Activated CD4-positive, alpha-beta memory T cell treated with anti-CD3 and anti-CD28 coated beads for 36 hours (primary cell): ENCODE measurements at regions of chr19 and their contacts with region 1.

Region 1: GRCh38 chr19:18000935-18001778 is 6.8 kb upstream of the ARRDC2 start:
- DNase-seq: peak; percentile 95
- H3K4me3 Mint-ChIP-seq: peak overlapping the region; percentile 87
- H3K27ac Mint-ChIP-seq: peak overlapping the region; percentile 97
- H3K4me1 Mint-ChIP-seq: peaks cover 22% of the 10 kb centered on the region
- H3K27me3 Mint-ChIP-seq: no peaks in the 10 kb centered on the region

Region 2: GRCh38 chr19:17873786-17874757 is 127.1 kb before region 1 on chr19:
- CTCF ChIA-PET with region 1: interaction called, 14 read pairs
- POLR2A ChIA-PET with region 1: no interaction called
- intact Hi-C with region 1: loop called (anchors 2 kb)
- DNase-seq: peak; percentile 84
- H3K4me3 Mint-ChIP-seq: peak overlapping the region; percentile 81
- H3K27ac Mint-ChIP-seq: no peak overlapping the region
- H3K4me1 Mint-ChIP-seq: peaks cover 17% of the 10 kb centered on the region
- H3K27me3 Mint-ChIP-seq: no peaks in the 10 kb centered on the region

Region 3: GRCh38 chr19:17932485-17933338 is 68.4 kb before region 1 on chr19 and contains the start of gene CCDC124:
- CTCF ChIA-PET with region 1: interaction called, 289 read pairs
- POLR2A ChIA-PET with region 1: interaction called, 8 read pairs
- intact Hi-C with region 1: no loop called
- DNase-seq: peak; percentile 96
- H3K4me3 Mint-ChIP-seq: peak within 1 kb of the TSS; percentile 91
- H3K27ac Mint-ChIP-seq: peak within 1 kb of the TSS; percentile 92
- H3K4me1 Mint-ChIP-seq: peaks cover 30% of the 10 kb centered on the region
- H3K27me3 Mint-ChIP-seq: no peaks in the 10 kb centered on the region
- total RNA-seq, gene CCDC124: 101 to 105 TPM

Region 4: GRCh38 chr19:17938092-17938845 is 62.9 kb before region 1 on chr19:
- CTCF ChIA-PET with region 1: interaction called, 289 read pairs
- POLR2A ChIA-PET with region 1: interaction called, 8 read pairs
- intact Hi-C with region 1: loop called (anchors 1 kb)
- DNase-seq: peak; percentile 91
- H3K4me3 Mint-ChIP-seq: no peak overlapping the region
- H3K27ac Mint-ChIP-seq: no peak overlapping the region
- H3K4me1 Mint-ChIP-seq: peaks cover 13% of the 10 kb centered on the region
- H3K27me3 Mint-ChIP-seq: no peaks in the 10 kb centered on the region

Region 5: DNA sequence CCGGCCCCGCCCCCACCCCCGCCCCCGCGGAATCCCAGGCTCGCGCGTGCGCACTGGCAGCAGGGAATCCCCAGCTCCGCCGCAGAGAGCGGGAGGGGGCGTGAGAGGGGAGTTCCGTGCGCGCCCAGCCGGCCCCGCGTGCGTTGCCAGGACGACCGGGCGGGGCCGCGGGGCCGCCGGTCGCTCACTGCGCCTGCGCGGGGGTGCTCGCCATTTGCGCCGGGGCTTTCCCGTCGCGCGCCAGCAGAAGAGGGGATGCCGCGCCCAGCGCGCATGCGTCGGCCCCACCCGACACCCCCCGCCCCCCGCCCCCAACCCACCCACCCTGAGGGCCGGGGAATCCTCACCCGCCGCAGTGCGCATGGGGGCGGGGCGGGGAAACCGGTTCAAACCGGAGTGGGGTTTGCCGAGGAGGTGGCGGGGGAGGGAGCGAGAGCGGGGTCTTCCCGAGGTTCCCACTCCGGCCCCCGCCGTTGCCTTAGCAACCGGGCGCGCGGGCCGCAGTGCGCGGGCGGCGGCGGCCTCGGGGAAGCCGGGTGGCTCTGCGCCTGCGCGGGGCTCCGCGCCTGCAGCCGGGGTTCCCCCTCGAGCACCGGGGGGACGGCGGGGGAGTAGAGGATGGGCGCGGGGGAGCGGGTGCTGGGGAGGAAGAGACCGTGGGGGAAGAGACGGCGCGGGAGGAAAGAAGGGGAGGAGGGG is 53.2 kb before region 1 on chr19:
- CTCF ChIA-PET with region 1: interaction called, 76 read pairs
- POLR2A ChIA-PET with region 1: interaction called, 3 read pairs
- intact Hi-C with region 1: loop called (anchors 1 kb)
- DNase-seq: peak; percentile 96
- H3K4me3 Mint-ChIP-seq: peak overlapping the region; percentile 52
- H3K27ac Mint-ChIP-seq: peak overlapping the region; percentile 86
- H3K4me1 Mint-ChIP-seq: peaks cover 45% of the 10 kb centered on the region
- H3K27me3 Mint-ChIP-seq: peaks cover 38% of the 10 kb centered on the region

Region 6: GRCh38 chr19:18013210-18014111 is 12.3 kb after region 1 on chr19:
- CTCF ChIA-PET with region 1: no interaction called
- POLR2A ChIA-PET with region 1: no interaction called
- intact Hi-C with region 1: no loop called
- DNase-seq: no peak
- H3K4me3 Mint-ChIP-seq: no peak overlapping the region
- H3K27ac Mint-ChIP-seq: peak overlapping the region; percentile 80
- H3K4me1 Mint-ChIP-seq: peaks cover 51% of the 10 kb centered on the region
- H3K27me3 Mint-ChIP-seq: no peaks in the 10 kb centered on the region

Region 7: DNA sequence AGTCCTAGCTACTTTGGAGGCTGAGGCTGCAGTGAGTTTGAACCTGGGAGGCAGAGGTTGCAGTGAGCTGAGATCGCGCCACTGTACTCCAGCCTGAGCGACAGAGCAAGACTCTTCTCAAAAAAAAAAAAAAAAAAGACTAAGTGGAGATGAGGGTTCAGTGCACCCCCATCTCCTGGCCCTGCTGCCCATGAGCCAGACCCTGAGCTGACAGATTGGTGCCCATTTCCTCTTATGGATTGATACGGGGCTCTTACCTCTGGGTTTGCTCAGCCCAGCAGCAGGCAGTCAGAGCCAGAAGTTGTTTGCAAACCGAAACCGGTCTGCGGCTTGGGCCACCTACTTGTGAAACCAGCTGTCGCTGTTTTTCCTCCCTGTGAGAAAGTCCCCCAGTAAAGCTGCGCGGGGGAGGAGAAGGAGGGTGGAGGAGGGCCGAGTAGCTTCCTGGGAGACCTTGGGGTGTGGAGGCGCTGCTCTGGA is 43.7 kb after region 1 on chr19:
- CTCF ChIA-PET with region 1: interaction called, 4 read pairs
- POLR2A ChIA-PET with region 1: interaction called, 12 read pairs
- intact Hi-C with region 1: loop called (anchors 1 kb)
- DNase-seq: peak; percentile 97
- H3K4me3 Mint-ChIP-seq: peak overlapping the region; percentile 50
- H3K27ac Mint-ChIP-seq: peak overlapping the region; percentile 75
- H3K4me1 Mint-ChIP-seq: peaks cover 37% of the 10 kb centered on the region
- H3K27me3 Mint-ChIP-seq: peaks cover 2% of the 10 kb centered on the region